Transverse colon (tissue), 4 donors: ENCODE measurements at regions of chr4 and their contacts with region 1.

Region 1: DNA sequence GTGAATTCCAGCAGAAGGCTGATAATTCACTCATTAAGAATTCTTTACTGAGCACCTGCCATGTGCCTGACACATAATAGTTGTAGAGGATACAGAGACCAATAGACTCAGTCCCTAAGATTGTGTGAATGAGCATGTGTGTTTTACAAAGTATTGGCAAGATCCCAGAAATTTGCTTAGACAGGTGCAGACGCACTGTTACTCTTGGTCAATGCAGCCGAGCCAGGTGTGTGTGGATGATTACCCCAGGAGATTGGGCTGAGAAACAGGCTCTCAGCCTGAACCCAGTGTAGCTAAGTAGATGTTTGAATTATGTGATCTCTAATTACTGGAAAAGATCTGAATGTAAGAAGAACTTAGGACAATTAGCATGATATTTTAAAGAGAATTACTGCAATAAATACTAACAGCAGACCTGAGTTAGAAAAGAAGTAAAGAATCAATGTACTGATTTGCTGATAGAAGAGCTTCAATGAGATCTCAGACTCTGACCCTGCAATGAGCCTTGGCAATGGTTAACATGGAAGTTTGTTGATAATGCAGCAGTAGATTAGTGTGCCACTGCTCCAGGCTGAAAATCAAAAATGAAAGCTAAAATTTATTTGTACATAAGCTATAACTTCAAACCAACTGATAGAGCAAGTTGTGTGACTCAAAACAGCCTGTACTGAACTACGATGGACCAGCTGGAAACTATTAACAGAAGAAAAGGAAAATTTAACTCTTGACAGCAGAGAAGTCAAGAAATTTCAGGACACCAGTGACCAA is 32.2 kb upstream of the NDST4 start:
- DNase-seq: peak; percentile 22
- H3K4me3 ChIP-seq: no peak overlapping the region
- H3K27ac ChIP-seq: peak overlapping the region in 2 of 4 donors; percentile 25 to 31
- H3K4me1 ChIP-seq: peaks cover 0 to 7% (median 2%) of the 10 kb centered on the region in 4 donors
- H3K27me3 ChIP-seq: no peaks in the 10 kb centered on the region
- CTCF ChIP-seq: no peak
- EP300 ChIP-seq: no peak
- POLR2A ChIP-seq: no peak

Region 2: GRCh38 chr4:113901994-113902787 is 1243.4 kb before region 1 on chr4:
- in situ Hi-C with region 1: no loop called
- intact Hi-C with region 1: loop called (anchors 10 kb)
- DNase-seq: peak; percentile 73
- H3K4me3 ChIP-seq: no peak overlapping the region
- H3K27ac ChIP-seq: peak overlapping the region; percentile 17 to 59 (median 49)
- H3K4me1 ChIP-seq: peaks cover 0 to 6% (median 0%) of the 10 kb centered on the region in 4 donors
- H3K27me3 ChIP-seq: no peaks in the 10 kb centered on the region
- CTCF ChIP-seq: peak; percentile 26 to 68 (median 53)
- EP300 ChIP-seq: no peak
- POLR2A ChIP-seq: no peak

Region 3: GRCh38 chr4:115274545-115274944 is 129.0 kb after region 1 on chr4:
- in situ Hi-C with region 1: no loop called
- intact Hi-C with region 1: no loop called
- DNase-seq: no peak
- H3K4me3 ChIP-seq: no peak overlapping the region
- H3K27ac ChIP-seq: no peak overlapping the region
- H3K4me1 ChIP-seq: no peaks in the 10 kb centered on the region
- H3K27me3 ChIP-seq: no peaks in the 10 kb centered on the region
- CTCF ChIP-seq: no peak
- EP300 ChIP-seq: no peak
- POLR2A ChIP-seq: no peak

Region 4: DNA sequence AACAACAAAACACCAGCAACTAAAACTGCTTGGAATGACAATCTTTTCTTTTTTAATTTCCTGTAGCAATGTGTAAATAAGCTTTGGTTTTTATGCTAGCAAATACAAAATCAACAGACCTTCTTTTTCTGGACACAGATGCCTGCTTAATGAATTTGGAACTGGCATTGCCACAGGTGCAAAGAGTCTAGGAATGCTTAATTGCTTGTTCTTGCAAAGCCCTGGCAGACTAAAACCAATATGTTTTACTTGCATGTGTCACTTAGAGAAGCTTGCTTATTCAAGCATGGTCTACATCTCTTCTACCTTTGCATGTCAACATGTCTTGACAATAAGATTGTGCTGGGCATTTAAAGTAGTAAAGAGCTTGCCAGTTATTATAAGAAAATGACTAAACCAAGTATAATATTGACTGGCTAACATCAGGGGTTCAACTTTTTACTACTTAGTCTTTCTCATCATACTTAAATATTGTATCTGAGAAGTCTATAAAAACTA is 624.5 kb after region 1 on chr4:
- in situ Hi-C with region 1: no loop called
- intact Hi-C with region 1: no loop called
- DNase-seq: no peak
- H3K4me3 ChIP-seq: no peak overlapping the region
- H3K27ac ChIP-seq: no peak overlapping the region
- H3K4me1 ChIP-seq: no peaks in the 10 kb centered on the region
- H3K27me3 ChIP-seq: no peaks in the 10 kb centered on the region
- CTCF ChIP-seq: no peak
- EP300 ChIP-seq: no peak
- POLR2A ChIP-seq: no peak